Psoas muscle (tissue), 8 donors: ENCODE measurements at regions of chr10 and their contacts with region 1.

Region 1: DNA sequence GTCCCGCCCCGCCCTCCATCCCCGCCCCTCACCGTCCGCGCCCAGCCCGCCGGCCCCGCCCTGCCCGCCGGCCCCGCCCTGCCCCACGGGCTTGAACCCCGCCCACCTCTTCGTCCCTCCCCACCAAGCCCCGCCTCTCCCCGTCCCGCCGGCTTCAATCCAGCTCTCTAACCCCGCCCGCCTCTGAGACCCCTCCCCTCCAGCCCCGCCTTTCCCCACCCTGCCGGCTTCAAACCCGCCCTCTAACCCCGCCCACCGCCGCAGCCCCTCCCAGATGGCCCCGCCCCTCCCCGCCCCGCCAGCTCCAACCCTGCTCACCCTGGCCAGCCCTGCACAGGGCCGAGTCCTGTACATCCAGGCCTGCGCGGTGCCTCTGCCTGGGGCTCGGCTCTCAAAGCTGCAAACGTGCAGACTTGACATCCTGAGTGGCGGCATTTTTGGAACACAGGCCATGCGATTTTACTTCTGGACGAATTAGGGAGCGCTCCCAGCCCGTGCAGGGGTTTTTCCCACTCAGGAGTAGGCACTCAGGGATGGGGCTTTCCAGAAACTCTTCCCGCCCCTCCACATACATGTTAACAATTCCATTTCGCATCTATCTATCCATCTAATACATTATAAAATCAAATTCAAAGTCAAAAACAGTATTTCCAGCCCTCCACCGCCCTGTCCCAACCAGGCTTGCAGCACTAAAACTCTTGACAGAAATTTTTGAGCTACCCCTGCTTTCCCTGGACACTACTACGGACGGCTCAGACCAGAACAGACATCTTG is 475 bp upstream of the NMT2 start:
- DNase-seq: peak; percentile 95 to 98
- ATAC-seq: peak; percentile 89 to 95 (median 92)
- H3K4me3 ChIP-seq: peak overlapping the region; percentile 48
- H3K27ac ChIP-seq: peak overlapping the region; percentile 58
- H3K4me1 ChIP-seq: peaks cover 33% of the 10 kb centered on the region
- H3K27me3 ChIP-seq: no peaks in the 10 kb centered on the region
- CTCF ChIP-seq: no peak

Region 2: DNA sequence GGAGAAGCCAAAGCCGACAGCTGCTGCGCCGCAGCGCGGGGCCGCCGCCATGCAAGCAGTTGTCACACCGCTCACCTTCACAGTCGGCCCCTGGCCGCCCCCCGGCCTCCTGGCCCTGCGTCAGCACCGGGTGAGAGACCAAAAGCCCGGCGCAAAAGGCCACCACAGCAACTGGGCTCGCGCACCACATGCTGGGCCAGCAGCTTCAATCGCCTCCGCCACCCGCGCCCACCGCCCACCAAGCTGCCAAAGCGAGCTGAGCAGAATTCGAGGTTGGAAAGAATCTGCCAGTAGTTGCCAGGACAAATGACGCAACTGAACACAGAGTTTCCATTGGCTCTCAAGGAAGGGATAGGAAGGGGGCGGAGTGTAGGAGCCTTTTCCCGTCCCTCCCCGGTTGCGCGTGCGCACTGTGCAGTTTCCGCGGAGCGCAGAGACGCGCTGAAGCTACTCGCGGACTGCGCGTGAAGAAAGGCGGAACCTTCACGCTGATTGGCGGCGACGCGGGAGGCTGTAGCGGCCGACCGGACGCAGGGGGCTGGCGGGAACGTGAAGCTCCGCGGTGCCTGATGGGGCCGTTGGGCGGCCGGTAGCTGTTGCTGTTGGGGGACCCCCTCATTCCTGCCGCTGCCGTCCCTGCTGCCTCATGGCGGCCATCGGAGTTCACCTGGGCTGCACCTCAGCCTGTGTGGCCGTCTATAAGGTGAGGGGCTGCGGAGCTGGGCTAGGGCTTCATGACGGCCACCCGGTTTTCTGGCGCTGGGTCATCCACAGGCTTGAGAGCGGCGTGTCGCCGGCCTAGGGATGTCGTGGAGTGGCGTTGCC is 331.0 kb before region 1 on chr10 and contains the starts of genes CDNF, HSPA14 and MSANTD7:
- intact Hi-C with region 1: loop called (anchors 5 to 10 kb)
- DNase-seq: peak; percentile 99 to 100
- ATAC-seq: peak; percentile 95 to 98 (median 96)
- H3K4me3 ChIP-seq: peak within 1 kb of the TSS; percentile 79
- H3K27ac ChIP-seq: peak within 1 kb of the TSS; percentile 97
- H3K4me1 ChIP-seq: peaks cover 18% of the 10 kb centered on the region
- H3K27me3 ChIP-seq: no peaks in the 10 kb centered on the region
- CTCF ChIP-seq: no peak
- total RNA-seq, gene CDNF: 15.4 to 23.5 (median 18.9) TPM
- total RNA-seq, gene HSPA14: 5.5 to 20.8 (median 14.0) TPM
- total RNA-seq, gene MSANTD7: 4.0 to 7.0 (median 5.8) TPM

Region 3: GRCh38 chr10:14959276-14960057 is 209.5 kb before region 1 on chr10 and contains the start of gene MEIG1:
- intact Hi-C with region 1: loop called in 1 of 2 experiments (anchors 2 kb)
- DNase-seq: peak; percentile 92 to 96
- ATAC-seq: peak; percentile 96 to 97 (median 96)
- H3K4me3 ChIP-seq: peak within 1 kb of the TSS; percentile 96
- H3K27ac ChIP-seq: peak within 1 kb of the TSS; percentile 97
- H3K4me1 ChIP-seq: no peaks in the 10 kb centered on the region
- H3K27me3 ChIP-seq: no peaks in the 10 kb centered on the region
- CTCF ChIP-seq: no peak
- total RNA-seq, gene MEIG1: not detected

Region 4: GRCh38 chr10:15097011-15097812 is 71.8 kb before region 1 on chr10 and contains the start of gene RPP38:
- intact Hi-C with region 1: loop called (anchors 5 kb)
- DNase-seq: peak; percentile 97 to 99
- ATAC-seq: peak; percentile 98 to 99 (median 99)
- H3K4me3 ChIP-seq: peak within 1 kb of the TSS; percentile 86
- H3K27ac ChIP-seq: peak within 1 kb of the TSS; percentile 93
- H3K4me1 ChIP-seq: peaks cover 8% of the 10 kb centered on the region
- H3K27me3 ChIP-seq: no peaks in the 10 kb centered on the region
- CTCF ChIP-seq: no peak
- total RNA-seq, gene RPP38: 7.3 to 17.2 (median 11.1) TPM

Region 5: GRCh38 chr10:15197276-15197675 is 28.3 kb after region 1 on chr10:
- intact Hi-C with region 1: loop called in 1 of 2 experiments (anchors 1 kb)
- DNase-seq: no peak
- ATAC-seq: no peak
- H3K4me3 ChIP-seq: no peak overlapping the region
- H3K27ac ChIP-seq: no peak overlapping the region
- H3K4me1 ChIP-seq: no peaks in the 10 kb centered on the region
- H3K27me3 ChIP-seq: peaks cover 0 to 2% (median 0%) of the 10 kb centered on the region in 3 donors
- CTCF ChIP-seq: no peak

Region 6: DNA sequence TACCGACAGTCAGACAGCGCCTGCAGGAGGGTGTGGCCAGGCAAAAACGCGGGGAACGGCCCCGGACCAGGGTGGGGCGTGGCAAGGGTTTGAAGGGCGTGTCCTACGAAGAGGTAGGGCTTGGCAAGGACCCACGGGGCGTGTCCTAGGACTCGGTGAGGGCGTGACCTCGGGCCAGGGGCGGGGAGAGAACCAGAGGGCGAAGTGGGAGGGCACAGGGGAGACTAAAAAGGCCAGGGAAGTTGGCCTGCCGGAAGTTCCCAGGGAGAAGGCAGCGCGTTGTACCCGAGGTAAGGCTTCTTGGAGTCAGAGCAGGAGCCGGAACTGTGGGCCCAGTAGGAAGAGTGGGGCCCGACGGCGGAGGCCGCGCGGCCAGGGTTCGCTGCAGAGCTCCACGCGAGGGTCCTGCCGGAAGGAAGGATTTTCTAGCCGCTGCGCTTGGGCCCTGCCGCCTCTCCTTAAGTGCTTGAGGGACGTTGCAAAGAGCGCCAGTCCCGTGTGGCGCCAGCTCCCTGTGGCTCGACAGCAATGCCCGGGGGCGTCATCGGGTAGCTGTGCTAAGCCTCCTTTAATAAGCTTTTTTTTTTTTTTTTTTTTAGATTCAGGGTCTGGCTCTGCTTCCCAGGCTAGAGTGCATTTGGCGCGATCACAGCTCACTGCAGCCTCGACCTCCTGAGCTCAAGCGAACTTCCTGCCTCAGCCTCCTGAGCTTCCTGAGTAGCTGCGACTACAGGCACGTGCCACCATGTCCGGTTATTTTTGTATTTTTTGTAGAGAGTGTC is 1268.0 kb after region 1 on chr10 and contains the start of gene PTER:
- intact Hi-C with region 1: loop called in 1 of 2 experiments (anchors 10 kb)
- DNase-seq: peak; percentile 97 to 99
- ATAC-seq: peak; percentile 98 to 99 (median 98)
- H3K4me3 ChIP-seq: peak within 1 kb of the TSS; percentile 92
- H3K27ac ChIP-seq: peak within 1 kb of the TSS; percentile 93
- H3K4me1 ChIP-seq: peaks cover 41% of the 10 kb centered on the region
- H3K27me3 ChIP-seq: no peaks in the 10 kb centered on the region
- CTCF ChIP-seq: no peak
- total RNA-seq, gene PTER: 6.7 to 10.3 (median 6.8) TPM

Region 7: DNA sequence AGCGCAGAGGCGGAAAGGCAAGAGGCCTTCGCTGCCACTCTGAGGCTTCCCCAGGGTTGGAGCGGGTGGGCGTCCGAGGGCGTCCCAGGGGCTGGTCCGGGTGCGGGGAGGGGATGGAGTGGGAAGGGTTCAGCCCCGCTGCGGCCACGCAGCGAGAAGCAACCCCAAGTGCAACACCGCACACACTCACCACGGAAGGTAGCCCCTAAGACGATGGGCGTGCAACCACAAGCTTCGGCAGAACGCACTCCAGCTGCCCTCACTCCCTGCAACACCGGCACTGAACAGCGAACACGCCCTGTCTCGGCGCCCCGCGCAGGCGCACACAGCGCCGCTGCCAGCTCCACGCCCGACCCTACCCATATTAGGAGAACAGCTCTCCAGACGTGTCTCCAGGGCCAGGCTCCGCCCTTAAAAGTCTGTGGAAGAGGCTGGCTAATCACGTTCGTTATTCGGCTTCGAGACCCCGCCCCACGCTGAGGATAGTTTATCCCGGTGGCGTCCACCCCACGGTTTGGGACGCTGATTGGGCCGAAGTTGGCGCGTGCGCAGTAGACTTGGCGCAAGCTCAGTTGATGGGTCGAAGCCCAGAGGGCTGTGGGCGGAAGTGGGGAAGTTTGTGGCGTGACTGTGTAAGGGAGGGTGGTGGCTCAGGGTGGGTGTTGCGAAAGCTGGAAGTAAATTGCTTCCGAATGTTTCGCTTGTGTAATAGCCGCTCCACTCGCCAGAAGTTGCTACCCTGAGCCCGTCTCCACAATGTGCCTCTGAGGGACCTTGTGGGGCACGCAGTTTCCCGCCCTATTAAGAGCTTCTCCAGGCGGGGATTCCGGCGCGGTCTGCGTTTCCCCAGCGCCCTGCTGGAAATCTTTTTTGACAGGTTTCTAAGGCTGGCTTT is 1648.4 kb after region 1 on chr10 and contains the start of gene RSU1:
- intact Hi-C with region 1: loop called in 1 of 2 experiments (anchors 10 kb)
- DNase-seq: peak; percentile 100
- ATAC-seq: peak; percentile 96 to 98 (median 98)
- H3K4me3 ChIP-seq: peak within 1 kb of the TSS; percentile 74
- H3K27ac ChIP-seq: peak within 1 kb of the TSS; percentile 84
- H3K4me1 ChIP-seq: peaks cover 14% of the 10 kb centered on the region
- H3K27me3 ChIP-seq: no peaks in the 10 kb centered on the region
- CTCF ChIP-seq: no peak
- total RNA-seq, gene RSU1: 19.7 to 41.6 (median 25.8) TPM